Right lobe of liver (tissue), 6 donors: ENCODE measurements at regions of chr5 and their contacts with region 1.

Region 1: DNA sequence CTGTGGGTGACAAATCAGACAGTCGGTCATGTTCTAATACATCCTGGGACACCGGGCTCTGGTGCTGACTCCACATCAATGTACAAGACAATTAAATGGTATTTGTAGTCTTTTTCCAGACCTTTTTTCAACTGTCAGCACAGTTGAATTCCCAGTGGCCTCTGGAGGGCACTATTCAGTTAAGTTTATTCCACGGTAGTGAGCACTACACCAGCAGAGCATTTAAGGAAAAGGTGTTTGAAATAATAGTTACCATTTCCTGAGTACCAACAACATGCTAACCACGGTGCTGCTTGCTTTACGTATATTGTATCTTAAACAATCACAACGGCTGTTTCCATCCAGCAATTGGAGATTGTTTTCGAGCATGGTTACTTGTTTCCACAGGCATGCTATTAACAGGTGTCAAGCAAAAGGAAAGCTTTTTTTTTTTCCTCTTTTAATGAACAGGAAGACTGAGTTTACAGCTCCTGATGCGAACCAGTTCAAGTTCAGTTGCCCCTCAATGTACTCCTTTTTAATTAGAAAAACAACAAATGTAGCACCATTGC is 186.7 kb downstream of the PDZD2 start:
- DNase-seq: peak in 1 of 3 donors; percentile 46
- ATAC-seq: peak; percentile 80 to 90 (median 86)
- H3K4me3 ChIP-seq: no peak overlapping the region
- H3K27ac ChIP-seq: no peak overlapping the region
- H3K4me1 ChIP-seq: no peaks in the 10 kb centered on the region
- H3K27me3 ChIP-seq: no peaks in the 10 kb centered on the region
- CTCF ChIP-seq: peak; percentile 56 to 70 (median 64)
- POLR2A ChIP-seq: no peak

Region 2: DNA sequence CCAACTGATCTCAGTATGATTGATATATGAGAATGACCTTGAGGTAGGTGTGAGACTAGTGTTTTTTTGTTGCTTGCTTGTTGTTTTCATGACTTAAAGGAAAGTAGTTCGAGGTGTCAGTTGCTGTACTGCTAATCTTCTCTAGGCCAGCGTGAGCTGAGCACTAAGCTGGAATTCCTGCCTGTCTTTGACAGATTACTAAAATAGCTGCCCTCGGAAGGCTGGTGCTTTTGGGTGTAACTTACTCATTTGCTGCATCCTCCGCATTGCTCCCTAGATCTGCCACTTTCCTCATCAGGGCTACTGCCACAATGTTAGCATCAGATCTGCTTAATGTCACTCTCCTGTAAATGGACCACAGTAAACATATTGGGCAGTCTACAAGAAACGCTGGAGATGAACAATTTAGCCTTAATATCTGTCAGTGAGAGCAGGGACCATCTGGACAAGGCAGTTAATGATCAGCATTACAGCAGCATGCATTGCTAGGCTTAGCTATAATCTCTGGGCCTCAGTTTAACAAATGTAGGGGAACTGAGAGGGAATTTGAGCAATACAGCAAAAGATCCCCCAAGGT is 738.7 kb before region 1 on chr5:
- intact Hi-C with region 1: no loop called
- DNase-seq: no peak
- ATAC-seq: no peak
- H3K4me3 ChIP-seq: no peak overlapping the region
- H3K27ac ChIP-seq: no peak overlapping the region
- H3K4me1 ChIP-seq: no peaks in the 10 kb centered on the region
- H3K27me3 ChIP-seq: no peaks in the 10 kb centered on the region
- CTCF ChIP-seq: no peak
- POLR2A ChIP-seq: no peak

Region 3: GRCh38 chr5:32076699-32077695 is 251.4 kb after region 1 on chr5:
- intact Hi-C with region 1: loop called (anchors 10 kb)
- DNase-seq: no peak
- ATAC-seq: peak; percentile 65 to 73 (median 66)
- H3K4me3 ChIP-seq: no peak overlapping the region
- H3K27ac ChIP-seq: no peak overlapping the region
- H3K4me1 ChIP-seq: no peaks in the 10 kb centered on the region
- H3K27me3 ChIP-seq: no peaks in the 10 kb centered on the region
- CTCF ChIP-seq: peak; percentile 68 to 77 (median 74)
- POLR2A ChIP-seq: no peak

Region 4: GRCh38 chr5:32083981-32084430 is 258.4 kb after region 1 on chr5:
- intact Hi-C with region 1: loop called (anchors 10 kb)
- DNase-seq: peak; percentile 42 to 75 (median 70)
- ATAC-seq: peak; percentile 95 to 99 (median 98)
- H3K4me3 ChIP-seq: no peak overlapping the region
- H3K27ac ChIP-seq: no peak overlapping the region
- H3K4me1 ChIP-seq: peaks cover 0 to 8% (median 0%) of the 10 kb centered on the region in 4 donors
- H3K27me3 ChIP-seq: no peaks in the 10 kb centered on the region
- CTCF ChIP-seq: no peak
- POLR2A ChIP-seq: no peak